Posterior cingulate gyrus (tissue), 11 donors: ENCODE measurements at regions of chr17 and their contacts with region 1.

Region 1: GRCh38 chr17:50719144-50719923 is at the start of gene LUC7L3:
- DNase-seq: peak; percentile 89 to 99 (median 94)

Region 2: DNA sequence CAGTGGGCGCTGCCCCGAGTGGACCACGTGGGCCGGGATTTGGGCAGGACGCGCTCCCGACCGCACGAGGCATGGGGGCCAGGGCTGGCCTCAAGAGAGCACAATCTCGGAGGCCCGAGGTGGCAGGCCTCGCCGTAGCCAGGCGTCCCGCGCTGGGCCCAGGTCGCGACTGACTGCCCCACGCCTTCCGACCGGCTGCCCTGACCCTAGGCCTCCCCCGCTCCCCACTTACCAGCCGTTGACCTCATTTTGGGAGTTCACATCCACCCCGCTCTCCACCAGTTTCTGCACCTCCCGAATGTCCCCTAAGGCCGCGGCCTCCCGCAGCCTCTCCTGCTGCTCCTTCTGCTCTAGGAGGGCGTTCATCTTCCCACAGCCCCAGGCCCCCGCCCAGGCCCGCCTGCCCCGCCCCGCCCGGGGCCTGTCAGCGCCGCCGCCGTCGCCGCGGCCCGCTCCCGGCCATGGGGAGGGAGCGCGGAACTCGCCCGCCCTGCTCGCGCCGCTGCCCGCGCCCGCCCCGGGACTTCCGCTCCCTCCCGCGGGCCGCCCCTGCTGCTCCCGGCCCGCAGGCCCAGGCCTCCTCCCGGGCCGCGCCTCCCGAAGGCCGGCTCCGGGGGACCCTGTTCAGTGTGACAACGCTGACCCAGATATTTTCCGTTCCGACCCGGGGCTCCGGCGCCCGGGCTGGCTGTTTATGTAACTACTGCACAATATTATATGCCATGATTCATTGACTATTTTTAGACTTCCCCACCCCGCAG is 11.9 kb before region 1 on chr17 and contains the start of gene ANKRD40:
- intact Hi-C with region 1: loop called (anchors 1 kb)
- DNase-seq: peak; percentile 80 to 98 (median 86)